ENCODE measurements at regions of chr9 and their contacts with region 1.

Region 1: DNA sequence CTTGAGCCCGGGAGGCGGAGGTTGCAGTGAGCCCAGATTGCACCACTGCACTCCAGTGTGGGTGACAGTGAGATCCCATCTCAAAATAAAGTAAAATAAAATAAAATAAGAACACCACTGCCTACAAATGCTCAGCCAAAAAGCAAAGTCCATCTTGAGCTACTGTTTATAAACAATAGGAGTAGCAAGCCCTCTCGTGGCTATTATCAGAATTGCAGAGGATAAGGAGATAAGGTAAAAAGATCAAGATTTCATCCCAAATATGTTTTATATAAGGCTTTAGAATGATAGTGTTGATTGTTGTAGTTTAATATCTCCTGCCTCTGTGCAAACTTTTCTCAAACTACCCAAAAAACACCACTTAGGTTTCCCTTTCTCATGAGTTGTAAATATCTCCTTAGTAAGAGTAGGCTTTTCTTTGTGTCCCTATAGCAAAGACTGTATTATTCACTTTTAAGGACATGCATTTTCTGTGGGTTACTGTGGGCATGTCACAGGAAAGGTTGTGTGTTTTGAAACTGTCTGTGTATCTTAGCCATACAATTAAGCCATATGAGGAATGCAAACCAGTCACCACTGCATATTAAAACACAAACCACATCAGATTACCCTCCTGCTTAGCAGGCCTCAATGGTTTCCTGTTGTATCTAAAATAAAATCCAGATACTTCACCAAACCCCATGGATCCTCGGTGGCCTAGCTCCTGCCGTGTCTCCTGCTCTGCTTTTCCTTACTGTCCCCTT is 31.8 kb upstream of the CKS2 start:
- DNase-seq: peak; percentile 55
- H3K4me3 ChIP-seq: no peak overlapping the region
- H3K27ac ChIP-seq: no peak overlapping the region
- H3K4me1 ChIP-seq: no peaks in the 10 kb centered on the region
- H3K27me3 ChIP-seq: no peaks in the 10 kb centered on the region
- CTCF ChIP-seq: peak; percentile 47 to 58
- POLR2A ChIP-seq: no peak

Region 2: DNA sequence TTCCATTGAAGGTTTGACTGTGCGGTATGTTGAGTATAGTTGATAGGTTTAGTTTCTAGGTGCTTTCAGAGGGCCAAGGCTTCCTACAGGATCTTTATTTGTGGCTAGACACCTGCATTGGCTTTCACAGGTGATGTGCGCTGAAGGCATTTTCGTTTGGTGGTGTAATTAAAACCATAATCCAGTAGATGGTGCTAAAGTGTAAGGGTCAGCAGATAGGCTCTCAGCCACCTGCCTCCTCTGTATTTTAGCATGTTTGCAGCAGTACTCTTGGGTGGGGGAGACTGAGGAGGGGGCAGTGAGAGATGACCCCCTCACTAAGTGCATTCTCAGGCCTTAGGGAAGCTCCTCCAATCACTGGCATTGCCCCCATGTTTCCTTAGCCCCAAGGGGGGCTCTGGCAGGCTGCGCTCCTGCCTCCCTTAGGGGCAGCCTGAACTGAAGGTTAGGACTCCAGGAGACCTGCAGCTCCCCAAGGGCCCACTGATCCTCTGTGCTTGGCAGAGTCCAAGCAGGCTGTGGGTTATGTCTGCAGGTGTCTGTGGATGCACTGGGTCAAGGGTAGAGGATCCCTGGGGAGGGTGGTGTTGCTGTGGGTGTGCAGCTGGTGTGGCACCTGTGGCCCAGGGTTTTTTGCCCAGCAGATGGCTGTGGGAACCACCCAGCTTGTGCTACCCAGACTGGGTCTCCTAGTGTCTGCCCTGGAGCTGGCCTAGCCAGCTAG is 1328.2 kb before region 1 on chr9:
- CTCF ChIA-PET with region 1: no interaction called
- POLR2A ChIA-PET with region 1: no interaction called
- dilution Hi-C with region 1: no loop called
- intact Hi-C with region 1: loop called (anchors 2 kb)
- DNase-seq: peak; percentile 32
- H3K4me3 ChIP-seq: no peak overlapping the region
- H3K27ac ChIP-seq: no peak overlapping the region
- H3K4me1 ChIP-seq: no peaks in the 10 kb centered on the region
- H3K27me3 ChIP-seq: peaks cover 0 to 2% of the 10 kb centered on the region in 2 experiments
- CTCF ChIP-seq: peak; percentile 31 to 50
- POLR2A ChIP-seq: no peak

Region 3: DNA sequence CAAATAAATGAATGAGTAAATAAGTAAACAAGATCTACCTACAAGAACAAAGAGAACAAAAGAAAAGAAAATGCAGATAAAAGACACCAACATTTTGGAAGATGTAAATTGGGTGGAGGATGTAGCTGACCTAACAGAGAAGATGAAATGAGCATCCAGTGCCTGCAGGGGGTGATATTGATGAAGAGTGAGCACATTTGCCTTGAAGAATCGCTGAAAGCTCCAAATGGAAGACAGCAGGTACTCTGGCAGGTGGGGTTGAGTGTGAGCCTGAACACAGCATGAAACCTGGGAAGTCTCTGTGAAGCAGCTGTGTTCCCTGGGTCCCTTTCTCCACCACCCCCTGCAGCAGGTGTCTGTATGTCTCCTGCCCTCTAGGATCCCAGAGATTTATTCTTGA is 618.6 kb before region 1 on chr9:
- CTCF ChIA-PET with region 1: interaction called, 23 read pairs
- POLR2A ChIA-PET with region 1: no interaction called
- dilution Hi-C with region 1: no loop called
- intact Hi-C with region 1: loop called (anchors 5 kb)
- DNase-seq: peak; percentile 46
- H3K4me3 ChIP-seq: no peak overlapping the region
- H3K27ac ChIP-seq: no peak overlapping the region
- H3K4me1 ChIP-seq: no peaks in the 10 kb centered on the region
- H3K27me3 ChIP-seq: no peaks in the 10 kb centered on the region
- CTCF ChIP-seq: peak; percentile 36 to 50
- POLR2A ChIP-seq: no peak

Region 4: DNA sequence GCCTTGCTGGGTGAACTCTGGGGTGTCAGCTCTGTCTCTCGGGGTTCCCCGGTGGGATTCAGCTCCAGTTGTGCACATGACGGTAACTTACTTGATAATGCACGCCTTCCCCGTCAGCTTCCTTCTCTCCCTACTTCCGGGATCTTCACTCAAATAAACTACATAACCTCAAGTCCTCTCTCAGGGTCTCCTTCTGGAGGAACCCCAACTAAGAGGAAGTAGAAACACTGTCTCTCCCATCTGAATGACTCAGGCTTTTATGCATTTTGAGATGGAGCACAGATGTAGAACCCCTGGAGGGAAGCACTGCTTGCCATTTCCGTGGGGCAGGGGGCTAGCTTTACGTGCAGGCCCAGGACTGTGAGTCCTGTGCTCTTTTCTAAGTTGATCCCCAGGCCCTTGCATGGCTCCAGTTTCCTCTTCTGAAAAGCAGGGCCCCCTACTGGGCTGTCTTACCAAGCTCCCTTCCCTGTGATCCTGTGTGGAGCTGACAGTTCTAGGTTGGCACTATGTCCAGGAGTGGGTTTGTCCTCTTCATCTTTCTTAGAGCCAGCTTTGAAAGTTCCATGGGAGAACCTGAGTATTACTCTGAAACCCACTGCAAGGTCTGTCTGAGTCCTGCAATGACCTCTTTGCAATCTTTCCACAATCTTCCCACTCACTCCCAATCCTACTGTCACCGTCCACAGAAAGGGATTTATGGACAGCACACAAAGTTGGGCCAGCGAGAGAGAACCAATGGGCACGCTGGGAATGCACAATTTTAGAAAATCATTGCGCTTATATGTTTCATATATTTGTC is 270.2 kb before region 1 on chr9:
- CTCF ChIA-PET with region 1: interaction called, 19 read pairs
- POLR2A ChIA-PET with region 1: no interaction called
- dilution Hi-C with region 1: no loop called
- intact Hi-C with region 1: no loop called
- DNase-seq: no peak
- H3K4me3 ChIP-seq: no peak overlapping the region
- H3K27ac ChIP-seq: no peak overlapping the region
- H3K4me1 ChIP-seq: peaks cover 2% of the 10 kb centered on the region
- H3K27me3 ChIP-seq: peaks cover 0 to 2% of the 10 kb centered on the region in 2 experiments
- CTCF ChIP-seq: peak in 1 of 2 donors; percentile 19
- POLR2A ChIP-seq: no peak

Region 5: GRCh38 chr9:89154651-89155336 is 124.4 kb before region 1 on chr9:
- CTCF ChIA-PET with region 1: interaction called, 11 read pairs
- POLR2A ChIA-PET with region 1: no interaction called
- dilution Hi-C with region 1: no loop called
- intact Hi-C with region 1: no loop called
- DNase-seq: peak; percentile 85
- H3K4me3 ChIP-seq: no peak overlapping the region
- H3K27ac ChIP-seq: peak overlapping the region; percentile 96
- H3K4me1 ChIP-seq: peaks cover 24% of the 10 kb centered on the region
- H3K27me3 ChIP-seq: no peaks in the 10 kb centered on the region
- CTCF ChIP-seq: no peak
- POLR2A ChIP-seq: no peak

Region 6: GRCh38 chr9:89295400-89295799 is 16.2 kb after region 1 on chr9:
- CTCF ChIA-PET with region 1: interaction called, 15 read pairs
- POLR2A ChIA-PET with region 1: no interaction called
- dilution Hi-C with region 1: no loop called
- intact Hi-C with region 1: no loop called
- DNase-seq: peak; percentile 41
- H3K4me3 ChIP-seq: no peak overlapping the region
- H3K27ac ChIP-seq: no peak overlapping the region
- H3K4me1 ChIP-seq: no peaks in the 10 kb centered on the region
- H3K27me3 ChIP-seq: no peaks in the 10 kb centered on the region
- CTCF ChIP-seq: no peak
- POLR2A ChIP-seq: no peak

Region 7: DNA sequence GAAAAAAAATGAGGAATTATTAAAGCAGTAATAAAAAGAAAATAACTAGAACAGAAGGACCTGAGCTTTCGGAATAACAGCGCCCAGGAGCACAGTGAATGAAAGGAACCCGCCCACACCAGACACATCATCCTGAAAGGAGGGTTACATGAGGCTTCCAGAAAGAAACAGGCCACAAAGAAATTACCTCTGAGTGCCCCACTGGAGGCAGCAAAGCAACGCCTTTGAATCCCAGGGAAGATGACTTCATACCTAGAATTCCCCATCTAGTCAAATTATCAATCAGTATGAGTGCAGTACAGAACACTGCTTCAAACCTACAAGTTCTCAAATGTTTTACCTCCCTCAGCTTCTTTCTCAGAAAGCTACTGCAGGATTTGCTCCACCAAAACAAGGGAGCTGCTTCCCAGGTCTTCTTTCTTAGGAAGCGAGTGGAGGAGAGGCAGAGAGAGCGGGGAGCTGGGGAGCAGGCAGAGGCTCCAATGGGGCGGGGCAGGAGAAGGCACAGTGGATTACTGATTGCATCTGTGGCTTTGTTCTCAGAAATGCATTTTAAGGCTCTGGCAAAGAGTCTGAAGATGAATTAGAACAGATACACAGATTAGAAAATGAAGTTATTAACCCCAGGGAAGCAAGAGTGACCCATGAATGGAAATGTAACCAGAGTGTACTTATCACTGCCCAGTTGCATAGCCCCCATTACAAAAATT is 131.6 kb after region 1 on chr9:
- CTCF ChIA-PET with region 1: no interaction called
- POLR2A ChIA-PET with region 1: no interaction called
- dilution Hi-C with region 1: no loop called
- intact Hi-C with region 1: no loop called
- DNase-seq: no peak
- H3K4me3 ChIP-seq: no peak overlapping the region
- H3K27ac ChIP-seq: no peak overlapping the region
- H3K4me1 ChIP-seq: peaks cover 2% of the 10 kb centered on the region
- H3K27me3 ChIP-seq: no peaks in the 10 kb centered on the region
- CTCF ChIP-seq: no peak
- POLR2A ChIP-seq: no peak

Measured in endothelial cell of umbilical vein (primary cell).